ENCODE measurements at regions of chr3 and their contacts with region 1.

Region 1: DNA sequence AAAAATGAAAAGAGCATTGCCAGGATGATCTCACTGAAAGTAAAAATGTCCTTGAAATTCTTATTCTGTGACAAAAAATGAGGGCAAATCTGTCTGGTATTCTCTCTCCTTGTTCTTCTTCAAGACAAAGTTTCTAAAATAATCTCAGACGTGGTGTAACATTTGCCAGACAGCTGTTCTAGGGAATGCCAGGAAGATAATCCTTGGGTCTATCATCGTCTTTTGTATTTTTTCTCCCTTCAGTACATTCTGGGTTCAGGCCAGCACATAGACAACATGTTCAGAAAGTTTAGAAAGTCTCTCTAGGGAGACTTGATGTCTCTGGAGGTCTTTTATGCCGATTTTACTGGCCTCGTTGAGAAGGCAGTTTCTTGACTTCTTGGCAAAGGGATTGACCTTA is 121.2 kb upstream of the HES1 start:
- DNase-seq: no peak
- ATAC-seq: no peak
- H3K4me3 ChIP-seq: no peak overlapping the region
- H3K27ac ChIP-seq: no peak overlapping the region
- H3K4me1 ChIP-seq: no peaks in the 10 kb centered on the region
- H3K27me3 ChIP-seq: no peaks in the 10 kb centered on the region
- CTCF ChIP-seq: no peak

Region 2: GRCh38 chr3:194070634-194071409 is 56.1 kb after region 1 on chr3:
- CTCF ChIA-PET with region 1: no interaction called
- POLR2A ChIA-PET with region 1: interaction called, 20 read pairs
- intact Hi-C with region 1: no loop called
- DNase-seq: peak; percentile 93
- ATAC-seq: peak; percentile 80
- H3K4me3 ChIP-seq: peak overlapping the region; percentile 60
- H3K27ac ChIP-seq: no peak overlapping the region
- H3K4me1 ChIP-seq: peaks cover 35% of the 10 kb centered on the region
- H3K27me3 ChIP-seq: no peaks in the 10 kb centered on the region
- CTCF ChIP-seq: no peak